Sigmoid colon (tissue), 7 donors: ENCODE measurements at regions of chr1 and their contacts with region 1.

Region 1: DNA sequence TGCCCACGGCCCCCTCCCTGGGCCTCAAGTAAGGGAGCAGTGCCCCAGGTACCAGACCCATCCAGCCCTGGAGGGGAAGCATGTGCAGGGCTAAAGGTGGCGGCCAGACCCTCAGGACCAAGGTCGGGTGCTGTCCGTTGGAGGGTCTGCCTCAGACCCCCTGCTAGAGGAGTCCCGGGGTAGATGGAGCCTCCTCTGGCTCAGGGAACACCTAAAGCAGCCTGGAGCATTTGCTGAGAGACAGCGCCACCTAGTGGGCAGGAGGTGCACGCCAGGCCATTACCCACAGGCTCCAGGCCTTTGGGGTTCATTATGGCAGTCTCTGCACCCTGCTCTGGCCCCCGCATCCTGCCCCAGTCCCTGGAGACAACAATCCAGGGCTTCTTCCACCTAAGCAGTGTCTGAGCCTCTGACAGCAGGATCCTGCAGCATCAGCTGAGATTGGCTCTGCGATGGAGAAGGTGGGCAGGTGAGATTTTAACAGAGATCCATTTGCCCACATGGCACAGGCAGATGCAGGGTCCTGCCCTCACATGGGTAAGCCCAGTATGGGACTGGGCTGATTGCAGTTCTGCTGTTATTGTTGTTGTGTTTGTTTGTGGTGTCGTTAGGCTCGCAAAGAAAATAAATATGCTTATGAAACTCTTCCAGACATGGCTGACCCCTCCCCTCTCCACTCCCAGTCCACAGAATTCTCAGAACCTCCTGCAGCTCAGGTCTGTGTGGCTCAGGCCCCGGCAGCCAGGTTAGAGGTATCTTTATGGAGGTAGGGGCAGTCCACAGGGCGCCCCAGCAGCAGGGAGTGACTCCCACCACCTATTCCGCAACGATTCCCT is 42.4 kb downstream of the CTNNBIP1 start:
- DNase-seq: peak; percentile 89
- H3K4me3 ChIP-seq: no peak overlapping the region
- H3K27ac ChIP-seq: no peak overlapping the region
- H3K4me1 ChIP-seq: peaks cover 0 to 7% (median 0%) of the 10 kb centered on the region in 4 donors
- H3K27me3 ChIP-seq: no peaks in the 10 kb centered on the region
- CTCF ChIP-seq: peak; percentile 90 to 99 (median 97)
- EP300 ChIP-seq: no peak
- POLR2A ChIP-seq: no peak

Region 2: DNA sequence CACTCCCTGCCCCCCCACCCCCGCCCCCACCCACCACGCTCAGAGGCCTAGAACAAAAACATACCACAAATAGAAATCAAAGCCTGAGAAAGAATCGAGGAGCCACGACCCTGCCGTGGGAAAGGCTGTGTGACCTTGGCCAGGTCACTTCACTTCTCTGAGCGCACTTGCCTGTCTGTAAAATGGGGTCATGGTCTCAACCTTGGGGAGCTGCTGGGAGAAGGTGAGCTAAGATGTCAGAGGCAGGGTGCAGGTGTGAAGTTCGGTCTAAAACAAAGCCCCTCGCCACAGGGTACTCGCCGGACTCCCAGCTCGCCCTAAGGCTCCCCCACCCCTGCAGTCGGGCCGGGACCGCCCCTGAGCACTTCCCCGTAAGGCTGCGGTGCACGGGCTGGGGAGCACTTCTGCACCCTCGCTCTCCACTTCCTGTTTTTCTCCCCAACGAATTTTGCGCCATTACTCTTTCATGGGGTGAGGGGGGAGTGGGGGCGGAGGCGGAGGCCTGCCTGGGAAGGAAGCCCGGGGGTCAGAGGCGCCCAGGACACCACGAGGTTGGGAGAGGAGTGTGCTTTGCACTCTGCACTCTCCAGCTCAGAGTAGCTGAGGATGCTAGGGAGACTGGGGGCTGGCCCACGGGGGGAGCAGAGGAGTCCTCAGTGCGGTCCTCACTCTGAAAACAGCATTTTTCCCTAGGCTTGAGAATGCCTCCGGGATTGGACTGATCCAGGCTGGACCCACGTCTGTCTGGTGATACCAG is 238.0 kb before region 1 on chr1:
- intact Hi-C with region 1: loop called (anchors 1 kb)
- DNase-seq: no peak
- H3K4me3 ChIP-seq: no peak overlapping the region
- H3K27ac ChIP-seq: no peak overlapping the region
- H3K4me1 ChIP-seq: peaks cover 0 to 11% (median 6%) of the 10 kb centered on the region in 4 donors
- H3K27me3 ChIP-seq: peaks cover 0 to 11% (median 0%) of the 10 kb centered on the region in 3 donors
- CTCF ChIP-seq: no peak
- EP300 ChIP-seq: no peak
- POLR2A ChIP-seq: no peak

Region 3: DNA sequence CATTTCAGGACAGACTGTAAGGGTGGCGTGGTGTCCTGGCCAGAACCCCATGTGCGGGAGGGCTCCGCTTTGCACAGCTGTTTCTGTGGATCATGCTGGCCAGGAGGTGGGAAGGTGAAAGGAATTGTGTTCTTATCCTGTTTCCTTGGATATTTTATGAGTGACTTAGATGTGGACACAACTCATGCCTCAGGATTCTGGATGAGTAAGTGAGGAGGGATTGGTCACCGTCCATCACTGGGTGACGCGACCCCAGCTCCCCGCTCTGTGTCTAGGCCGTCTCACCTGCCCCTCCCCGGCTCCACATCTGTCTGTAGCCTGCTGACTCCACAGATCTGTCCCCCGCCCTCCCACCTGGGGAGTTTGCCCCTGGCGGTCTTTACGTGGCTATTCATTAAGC is 167.3 kb before region 1 on chr1:
- intact Hi-C with region 1: loop called (anchors 5 kb)
- DNase-seq: no peak
- H3K4me3 ChIP-seq: no peak overlapping the region
- H3K27ac ChIP-seq: no peak overlapping the region
- H3K4me1 ChIP-seq: no peaks in the 10 kb centered on the region
- H3K27me3 ChIP-seq: no peaks in the 10 kb centered on the region
- CTCF ChIP-seq: no peak
- EP300 ChIP-seq: no peak
- POLR2A ChIP-seq: no peak

Region 4: DNA sequence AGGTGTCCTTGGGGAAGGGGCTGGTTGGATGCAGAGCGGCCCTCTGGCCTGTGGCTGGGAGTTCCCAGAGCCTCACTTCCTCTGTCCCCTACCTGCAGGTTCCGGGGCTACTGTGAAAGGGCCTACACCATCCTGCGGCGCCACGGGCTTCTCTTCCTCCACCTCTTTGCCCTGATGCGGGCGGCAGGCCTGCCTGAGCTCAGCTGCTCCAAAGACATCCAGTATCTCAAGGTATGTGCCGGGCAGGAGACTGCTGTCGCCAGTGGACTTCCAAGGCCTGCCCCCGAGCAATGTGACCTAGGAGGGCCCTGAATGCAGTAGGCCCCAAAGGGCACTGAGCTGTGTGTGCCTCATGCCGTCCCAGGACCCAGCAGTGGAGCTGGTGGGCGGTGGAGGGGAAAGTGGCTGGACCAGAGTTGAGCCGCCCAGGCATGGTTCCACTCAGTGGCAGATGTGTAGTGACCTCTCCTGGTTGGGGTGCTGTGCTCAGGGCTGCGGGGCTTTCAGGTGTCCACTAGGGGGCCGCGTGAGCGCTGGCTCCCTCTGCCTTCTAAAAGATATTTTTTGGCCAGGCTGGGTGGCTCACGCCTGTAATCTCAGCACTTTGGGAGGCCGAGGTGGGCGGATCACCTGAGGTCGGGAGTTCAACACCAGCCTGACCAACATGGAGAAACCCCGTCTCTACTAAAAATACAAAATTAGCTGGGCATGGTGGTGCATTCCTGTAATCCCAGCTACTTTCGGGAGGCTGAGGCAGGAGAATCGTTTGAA is 142.7 kb before region 1 on chr1:
- intact Hi-C with region 1: loop called (anchors 5 kb)
- DNase-seq: peak; percentile 73
- H3K4me3 ChIP-seq: no peak overlapping the region
- H3K27ac ChIP-seq: no peak overlapping the region
- H3K4me1 ChIP-seq: peaks cover 0 to under 1% (median 0%) of the 10 kb centered on the region in 4 donors
- H3K27me3 ChIP-seq: no peaks in the 10 kb centered on the region
- CTCF ChIP-seq: peak; percentile 43 to 75 (median 73)
- EP300 ChIP-seq: no peak
- POLR2A ChIP-seq: no peak

Region 5: DNA sequence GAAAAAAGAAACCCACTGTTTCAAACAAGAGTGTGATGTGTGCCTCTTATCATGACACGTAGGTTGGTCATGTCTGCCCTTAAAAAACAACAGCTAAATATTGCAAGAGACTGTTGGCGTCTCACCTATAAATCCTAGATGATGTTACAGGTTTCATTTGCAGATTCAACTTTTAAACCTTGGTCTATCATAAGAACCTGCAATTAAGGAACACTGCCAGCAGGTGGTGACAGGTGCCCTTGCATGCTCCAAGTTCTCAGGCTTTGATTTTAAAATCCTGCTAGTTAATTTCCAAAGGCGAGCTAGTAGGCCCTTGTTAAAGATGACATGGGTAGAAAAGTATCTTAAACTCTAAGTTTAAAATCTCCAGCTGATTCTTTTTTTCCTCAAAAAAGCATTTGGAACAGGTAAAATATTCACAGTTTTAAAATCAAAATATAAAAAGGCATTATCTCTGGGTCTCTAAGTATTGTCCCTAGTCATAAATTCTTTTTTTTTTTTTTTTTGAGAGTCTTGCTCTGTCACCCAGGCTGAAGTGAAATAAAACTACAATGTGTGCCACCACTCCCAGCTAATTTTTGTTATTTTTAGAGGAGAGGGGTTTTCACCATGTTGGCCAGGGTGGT is 83.0 kb before region 1 on chr1:
- intact Hi-C with region 1: loop called (anchors 1 kb)
- DNase-seq: peak; percentile 65
- H3K4me3 ChIP-seq: no peak overlapping the region
- H3K27ac ChIP-seq: no peak overlapping the region
- H3K4me1 ChIP-seq: no peaks in the 10 kb centered on the region
- H3K27me3 ChIP-seq: no peaks in the 10 kb centered on the region
- CTCF ChIP-seq: peak; percentile 13 to 72 (median 54)
- EP300 ChIP-seq: no peak
- POLR2A ChIP-seq: no peak

Region 6: GRCh38 chr1:9823943-9824701 is 43.5 kb before region 1 on chr1 and contains the start of gene CLSTN1:
- intact Hi-C with region 1: loop called (anchors 5 kb)
- DNase-seq: peak; percentile 94
- H3K4me3 ChIP-seq: peak within 1 kb of the TSS; percentile 77 to 93 (median 84)
- H3K27ac ChIP-seq: peak within 1 kb of the TSS; percentile 87 to 97 (median 94)
- H3K4me1 ChIP-seq: peaks cover 0 to 42% (median 34%) of the 10 kb centered on the region in 4 donors
- H3K27me3 ChIP-seq: no peaks in the 10 kb centered on the region
- CTCF ChIP-seq: no peak
- EP300 ChIP-seq: no peak
- POLR2A ChIP-seq: peak; percentile 25 to 28
- total RNA-seq, gene CLSTN1: 33.9 to 71.2 (median 36.4) TPM